A673 (cell line): ENCODE measurements at regions of chr6 and their contacts with region 1.

Region 1: GRCh38 chr6:16712931-16713484 is 48.3 kb downstream of the ATXN1 start:
- DNase-seq: peak; percentile 93
- H3K4me3 ChIP-seq: peak overlapping the region; percentile 35
- H3K27ac ChIP-seq: peak overlapping the region; percentile 78
- H3K4me1 ChIP-seq: peaks cover 36% of the 10 kb centered on the region
- H3K27me3 ChIP-seq: no peaks in the 10 kb centered on the region
- CTCF ChIP-seq: peak; percentile 63

Region 2: DNA sequence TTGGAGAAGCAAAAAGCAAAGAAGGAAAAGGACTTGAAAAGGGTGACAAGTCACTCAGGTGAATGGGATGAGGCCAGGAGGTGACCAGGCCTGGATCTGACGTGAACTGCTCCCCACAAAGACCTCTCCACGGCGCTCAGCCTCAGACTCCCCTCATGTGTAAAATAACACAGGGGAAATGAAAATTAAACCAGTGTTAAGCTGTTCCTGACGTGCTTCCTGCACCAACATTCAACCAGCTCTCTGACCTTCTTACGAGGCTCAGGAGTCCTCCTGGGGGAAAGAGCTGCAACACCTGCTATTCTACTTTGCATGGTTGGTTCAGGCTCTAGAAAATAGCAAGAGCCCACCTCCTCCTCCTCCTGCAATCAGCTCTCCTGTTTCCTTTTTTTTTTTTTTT is 208.4 kb before region 1 on chr6:
- CTCF ChIA-PET with region 1: no interaction called
- POLR2A ChIA-PET with region 1: interaction called, 15 read pairs
- intact Hi-C with region 1: no loop called
- DNase-seq: no peak
- H3K4me3 ChIP-seq: no peak overlapping the region
- H3K27ac ChIP-seq: no peak overlapping the region
- H3K4me1 ChIP-seq: peaks cover 18% of the 10 kb centered on the region
- H3K27me3 ChIP-seq: no peaks in the 10 kb centered on the region
- CTCF ChIP-seq: no peak

Region 3: GRCh38 chr6:16776394-16777017 is 63.5 kb after region 1 on chr6:
- CTCF ChIA-PET with region 1: no interaction called
- POLR2A ChIA-PET with region 1: no interaction called
- intact Hi-C with region 1: no loop called
- DNase-seq: peak; percentile 25
- H3K4me3 ChIP-seq: no peak overlapping the region
- H3K27ac ChIP-seq: no peak overlapping the region
- H3K4me1 ChIP-seq: peaks cover 35% of the 10 kb centered on the region
- H3K27me3 ChIP-seq: no peaks in the 10 kb centered on the region
- CTCF ChIP-seq: 0 out of 2 replicates have a peak, but pooled peaks have one; percentile 14

Region 4: DNA sequence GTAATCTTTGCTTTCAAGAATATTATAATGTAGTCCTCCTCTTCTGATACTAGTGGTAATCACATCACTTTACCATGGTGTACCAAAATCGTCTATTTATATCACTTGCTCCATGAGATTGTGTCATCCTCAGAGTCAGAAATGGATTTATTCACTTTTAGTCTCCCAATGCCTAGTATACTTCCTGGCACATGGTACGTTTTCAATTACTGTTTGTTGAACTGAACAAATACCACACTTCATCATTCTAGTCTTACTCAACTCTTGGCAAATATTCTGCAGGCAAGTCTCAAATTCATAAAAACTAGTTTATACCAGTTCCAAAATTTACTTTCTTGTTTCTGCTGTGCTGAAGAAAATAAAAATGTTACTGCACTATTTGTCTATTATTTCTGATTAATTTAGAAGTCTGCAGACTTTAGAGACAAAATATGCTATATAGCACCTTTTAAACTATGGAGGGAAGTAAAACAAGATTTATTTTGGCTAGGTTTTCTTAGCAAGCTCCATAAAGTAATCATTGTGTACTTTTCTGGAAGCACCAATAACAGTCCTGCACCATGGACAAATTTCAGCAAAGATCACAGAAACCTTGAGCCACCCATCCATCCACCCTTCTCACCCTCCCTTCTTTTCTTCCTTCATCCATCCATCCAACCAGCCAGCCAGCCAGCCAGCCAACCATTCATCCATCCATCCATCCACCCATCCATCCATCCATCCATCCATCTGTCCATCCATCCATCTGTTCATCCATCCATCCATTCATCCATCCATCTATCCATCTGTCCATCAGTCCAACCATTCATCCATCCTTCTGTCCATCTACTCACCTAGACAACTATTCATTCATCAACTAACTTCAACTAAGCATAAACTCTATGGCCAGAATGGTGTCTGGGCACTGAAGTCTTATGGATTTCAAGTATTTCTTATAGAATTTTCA is 286.8 kb after region 1 on chr6:
- CTCF ChIA-PET with region 1: no interaction called
- POLR2A ChIA-PET with region 1: no interaction called
- intact Hi-C with region 1: no loop called
- DNase-seq: no peak
- H3K4me3 ChIP-seq: no peak overlapping the region
- H3K27ac ChIP-seq: no peak overlapping the region
- H3K4me1 ChIP-seq: peaks cover 22% of the 10 kb centered on the region
- H3K27me3 ChIP-seq: no peaks in the 10 kb centered on the region
- CTCF ChIP-seq: no peak